Natural killer cell (primary cell): ENCODE measurements at regions of chr7 and their contacts with region 1.

Region 1: DNA sequence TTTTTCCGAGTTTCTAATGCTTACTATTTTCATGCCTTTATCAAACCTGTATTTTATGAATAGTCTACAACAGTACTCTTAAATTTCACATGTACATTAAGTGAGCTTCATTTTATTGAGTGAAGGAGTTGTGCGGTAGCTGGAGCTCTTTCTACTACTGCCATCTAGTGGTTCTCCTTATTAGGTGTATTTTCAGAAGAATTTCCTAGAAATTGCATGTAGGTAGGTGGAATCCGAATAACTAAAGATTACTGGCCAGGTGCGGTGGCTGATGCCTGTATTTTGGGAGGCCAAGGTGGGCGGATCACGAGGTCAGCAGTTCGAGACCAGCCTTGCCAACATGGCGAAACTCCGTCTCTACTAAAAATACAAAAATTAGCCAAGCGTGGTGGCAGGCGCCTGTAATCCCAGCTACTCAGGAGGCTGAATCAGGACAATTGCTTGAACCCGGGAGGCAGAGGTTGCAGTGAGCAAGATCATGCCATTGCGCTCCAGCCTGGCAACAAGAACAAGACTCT is 38.3 kb downstream of the LRRC72 start:
- DNase-seq: peak in 1 of 2 donors; percentile 70
- ATAC-seq: peak in 2 of 3 donors; percentile 46 to 68
- H3K4me3 ChIP-seq: no peak overlapping the region
- H3K4me3 Mint-ChIP-seq: peak overlapping the region; percentile 76
- H3K27ac ChIP-seq: no peak overlapping the region
- H3K27ac Mint-ChIP-seq: peak overlapping the region; percentile 78
- H3K4me1 ChIP-seq: no peaks in the 10 kb centered on the region
- H3K4me1 Mint-ChIP-seq: peaks cover 22% of the 10 kb centered on the region in 2 donors
- H3K27me3 ChIP-seq: no peaks in the 10 kb centered on the region
- H3K27me3 Mint-ChIP-seq: peaks cover 9 to 17% of the 10 kb centered on the region in 2 donors
- CTCF ChIP-seq: peak; percentile 84

Region 2: DNA sequence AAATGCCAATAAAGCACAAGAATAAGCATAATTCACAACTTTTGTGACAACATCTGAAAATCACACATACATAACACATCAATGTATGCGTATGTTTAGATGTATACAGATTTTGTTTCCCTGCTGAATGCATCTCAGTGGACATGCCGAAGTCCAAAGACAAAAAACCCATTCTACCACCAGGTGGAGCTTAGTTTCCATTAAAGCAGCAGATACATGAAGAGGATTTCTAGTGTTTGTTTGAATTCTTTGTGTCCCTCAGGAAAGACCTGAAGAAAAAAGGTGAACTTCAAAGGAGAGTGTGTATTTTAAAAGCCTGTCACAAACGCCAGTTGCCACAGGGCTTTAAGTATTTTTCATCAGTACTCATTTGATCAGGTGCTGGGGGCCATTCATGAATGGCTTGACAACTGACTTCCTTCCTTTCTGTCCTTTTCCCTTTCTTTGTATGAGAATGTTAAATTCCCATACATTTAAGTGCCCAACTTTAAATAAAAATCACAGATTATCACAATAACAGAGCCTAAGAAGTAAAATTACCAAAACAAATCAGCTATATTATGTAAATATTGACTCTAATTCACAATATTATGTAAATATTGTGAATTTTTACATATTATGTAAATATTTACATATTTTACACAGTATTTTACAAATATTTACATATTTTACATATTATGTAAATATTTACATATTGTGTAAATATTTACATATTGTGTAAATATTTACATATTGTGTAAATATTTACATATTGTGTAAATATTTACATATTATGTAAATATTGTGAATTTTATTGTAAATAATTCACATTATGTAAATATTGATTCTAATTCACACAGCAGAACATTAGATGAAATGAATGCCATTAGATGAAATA is 486.7 kb before region 1 on chr7:
- intact Hi-C with region 1: loop called (anchors 1 kb)
- DNase-seq: peak in 1 of 2 donors; percentile 61
- ATAC-seq: peak in 1 of 3 donors; percentile 67
- H3K4me3 ChIP-seq: no peak overlapping the region
- H3K4me3 Mint-ChIP-seq: no peak overlapping the region
- H3K27ac ChIP-seq: no peak overlapping the region
- H3K27ac Mint-ChIP-seq: no peak overlapping the region
- H3K4me1 ChIP-seq: peaks cover 2% of the 10 kb centered on the region
- H3K4me1 Mint-ChIP-seq: peaks cover 8 to 13% of the 10 kb centered on the region in 2 donors
- H3K27me3 ChIP-seq: no peaks in the 10 kb centered on the region
- H3K27me3 Mint-ChIP-seq: no peaks in the 10 kb centered on the region
- CTCF ChIP-seq: peak; percentile 63

Region 3: DNA sequence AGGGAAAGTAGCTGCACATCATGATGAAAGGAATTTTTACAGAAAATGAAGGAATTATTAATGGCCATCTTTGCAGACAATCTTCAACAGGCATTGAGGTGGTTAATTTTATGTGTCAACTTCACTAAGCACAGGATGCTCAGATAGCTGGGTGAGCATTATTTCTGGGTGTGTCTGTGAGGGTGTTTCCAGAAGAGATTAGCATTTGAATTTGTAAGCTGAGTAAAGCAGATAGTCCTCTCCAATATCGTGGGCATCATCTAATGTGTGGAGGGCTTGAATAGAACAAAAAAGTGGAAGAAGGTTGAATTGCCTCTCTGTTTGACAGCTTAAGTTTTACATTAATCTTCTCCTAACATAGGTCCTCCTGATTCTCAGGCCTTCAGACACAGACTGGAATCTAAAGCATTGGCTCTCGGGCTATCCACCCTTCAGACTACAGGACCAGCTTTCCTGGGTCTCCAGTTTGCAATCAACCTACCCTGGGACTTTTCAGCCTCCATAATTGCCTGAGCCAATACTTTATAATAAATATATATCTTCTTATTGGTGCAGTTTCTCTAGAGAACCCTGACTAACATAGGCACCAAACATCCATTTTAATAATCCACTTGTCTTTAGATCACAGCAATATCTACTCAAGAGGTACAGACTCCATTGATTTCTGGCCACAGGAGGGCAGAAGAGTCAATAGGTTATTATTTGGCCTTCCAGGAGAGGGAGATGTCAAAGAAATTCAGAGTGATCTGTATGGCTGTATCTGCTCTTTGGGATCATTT is 133.1 kb before region 1 on chr7:
- intact Hi-C with region 1: loop called (anchors 1 kb)
- DNase-seq: peak in 1 of 2 donors; percentile 70
- ATAC-seq: peak; percentile 60 to 76 (median 69)
- H3K4me3 ChIP-seq: no peak overlapping the region
- H3K4me3 Mint-ChIP-seq: no peak overlapping the region
- H3K27ac ChIP-seq: no peak overlapping the region
- H3K27ac Mint-ChIP-seq: no peak overlapping the region
- H3K4me1 ChIP-seq: no peaks in the 10 kb centered on the region
- H3K4me1 Mint-ChIP-seq: peaks cover 9 to 10% of the 10 kb centered on the region in 2 donors
- H3K27me3 ChIP-seq: peaks cover 2% of the 10 kb centered on the region
- H3K27me3 Mint-ChIP-seq: peaks cover 0 to 14% of the 10 kb centered on the region in 2 donors
- CTCF ChIP-seq: peak; percentile 55

Region 4: GRCh38 chr7:16543456-16543855 is 21.5 kb before region 1 on chr7:
- intact Hi-C with region 1: no loop called
- DNase-seq: no peak
- ATAC-seq: no peak
- H3K4me3 ChIP-seq: no peak overlapping the region
- H3K4me3 Mint-ChIP-seq: no peak overlapping the region
- H3K27ac ChIP-seq: no peak overlapping the region
- H3K27ac Mint-ChIP-seq: no peak overlapping the region
- H3K4me1 ChIP-seq: no peaks in the 10 kb centered on the region
- H3K4me1 Mint-ChIP-seq: no peaks in the 10 kb centered on the region
- H3K27me3 ChIP-seq: no peaks in the 10 kb centered on the region
- H3K27me3 Mint-ChIP-seq: peaks cover 0 to 4% of the 10 kb centered on the region in 2 donors
- CTCF ChIP-seq: no peak

Region 5: GRCh38 chr7:16554518-16555236 is 10.3 kb before region 1 on chr7:
- intact Hi-C with region 1: no loop called
- DNase-seq: no peak
- ATAC-seq: no peak
- H3K4me3 ChIP-seq: no peak overlapping the region
- H3K4me3 Mint-ChIP-seq: no peak overlapping the region
- H3K27ac ChIP-seq: no peak overlapping the region
- H3K27ac Mint-ChIP-seq: no peak overlapping the region
- H3K4me1 ChIP-seq: no peaks in the 10 kb centered on the region
- H3K4me1 Mint-ChIP-seq: peaks cover 5% of the 10 kb centered on the region in 2 donors
- H3K27me3 ChIP-seq: no peaks in the 10 kb centered on the region
- H3K27me3 Mint-ChIP-seq: peaks cover 4 to 8% of the 10 kb centered on the region in 2 donors
- CTCF ChIP-seq: no peak

Region 6: DNA sequence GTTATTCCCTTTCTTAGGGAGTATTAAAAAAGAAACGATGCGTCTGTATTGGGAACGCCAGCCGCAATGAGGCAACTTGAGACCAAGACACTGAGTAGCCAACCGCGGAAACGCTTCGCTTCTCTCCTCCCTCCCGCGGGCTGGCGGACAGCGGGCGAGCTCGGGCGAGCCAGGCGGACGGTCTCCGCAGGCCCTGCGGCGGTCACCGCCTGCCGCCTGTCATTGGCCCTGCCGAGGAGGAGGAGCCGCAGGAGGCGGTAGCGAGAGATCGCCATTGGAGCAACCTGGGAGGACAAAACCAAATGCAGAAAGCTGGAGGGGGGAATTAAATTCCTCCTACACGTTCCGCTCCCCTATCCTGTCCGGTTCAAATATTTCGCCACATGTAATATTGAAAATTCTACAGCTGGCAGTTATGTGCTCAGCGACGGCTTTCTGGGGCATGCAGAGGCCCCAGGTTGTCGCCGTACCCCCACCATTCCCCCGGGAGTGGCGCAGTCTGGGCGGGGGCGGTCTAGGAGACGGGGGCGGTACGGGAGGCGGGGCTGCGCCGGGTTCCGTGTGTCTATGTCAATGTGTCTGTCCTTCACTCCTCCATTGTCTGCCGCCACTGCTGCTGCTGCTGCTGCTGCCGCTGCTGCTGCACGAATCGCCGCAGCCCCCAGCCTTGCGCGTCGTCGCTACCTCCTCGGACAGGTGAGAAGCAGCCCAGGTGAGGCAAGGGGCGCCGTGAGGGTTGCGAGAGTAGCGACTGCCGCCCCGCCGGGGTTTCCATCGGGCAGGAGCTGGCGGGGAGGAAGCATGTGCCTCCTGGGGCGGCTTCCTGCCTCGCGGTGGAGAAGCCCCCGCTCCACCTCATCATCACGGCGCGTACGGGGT is 80.9 kb after region 1 on chr7 and contains the starts of genes ANKMY2 and BZW2:
- intact Hi-C with region 1: loop called (anchors 10 kb)
- DNase-seq: peak; percentile 93 to 96
- ATAC-seq: peak; percentile 85 to 97 (median 90)
- H3K4me3 ChIP-seq: peak within 1 kb of the TSS; percentile 76
- H3K4me3 Mint-ChIP-seq: peak within 1 kb of the TSS; percentile 99
- H3K27ac ChIP-seq: peak within 1 kb of the TSS; percentile 92
- H3K27ac Mint-ChIP-seq: peak within 1 kb of the TSS; percentile 94 to 96
- H3K4me1 ChIP-seq: peaks cover 21% of the 10 kb centered on the region
- H3K4me1 Mint-ChIP-seq: peaks cover 60 to 70% of the 10 kb centered on the region in 2 donors
- H3K27me3 ChIP-seq: no peaks in the 10 kb centered on the region
- H3K27me3 Mint-ChIP-seq: no peaks in the 10 kb centered on the region
- CTCF ChIP-seq: no peak
- total RNA-seq, gene ANKMY2: 15.5 to 21.4 (median 19.4) TPM
- total RNA-seq, gene BZW2: 15.3 to 21.0 (median 19.9) TPM